Posterior vena cava (tissue), 2 donors: ENCODE measurements at regions of chr20 and their contacts with region 1.

Region 1: DNA sequence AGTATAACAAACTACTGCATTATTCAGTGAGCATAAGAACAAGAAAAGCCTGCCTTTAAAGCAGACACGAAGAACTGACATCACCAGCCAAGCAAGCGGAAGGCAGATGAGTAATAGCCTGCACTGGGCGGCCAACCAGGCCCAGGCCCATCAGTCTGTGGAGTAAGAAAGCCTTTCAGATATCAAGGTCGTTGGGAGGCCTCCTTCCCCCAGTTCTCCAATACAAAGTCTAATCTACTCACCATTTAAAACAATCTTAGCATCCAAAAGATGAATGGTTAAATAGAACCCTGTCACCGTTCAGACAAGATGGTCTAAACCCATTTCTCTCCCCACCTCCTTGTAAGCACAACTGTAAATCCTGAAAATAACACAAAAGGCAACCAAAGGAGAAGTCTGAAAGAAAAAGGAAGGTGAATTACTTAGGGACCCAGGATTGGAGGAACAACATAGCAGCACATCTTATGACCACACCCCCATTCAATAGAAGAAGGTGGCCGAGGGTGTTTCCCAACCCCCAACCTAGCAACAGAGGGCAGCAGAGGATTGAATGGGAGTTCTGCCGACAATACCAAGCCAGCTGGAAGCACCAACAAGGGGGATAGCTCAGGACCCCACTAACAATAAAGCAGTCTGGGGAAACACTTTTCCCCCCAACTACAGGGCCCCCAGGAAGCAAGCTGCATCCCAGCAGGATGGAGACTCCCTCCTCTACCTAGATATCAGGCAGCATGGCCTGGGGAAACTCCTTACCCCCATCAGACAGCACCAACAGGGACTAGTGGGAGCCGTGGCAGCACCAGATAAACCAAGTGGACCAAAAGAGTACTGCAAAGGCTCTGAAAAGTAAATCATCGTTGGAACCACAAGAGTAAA is 67.9 kb downstream of the ZHX3 start:
- DNase-seq: peak; percentile 94

Region 2: GRCh38 chr20:41232973-41233926 is 16.4 kb before region 1 on chr20:
- intact Hi-C with region 1: loop called in 1 of 2 experiments (anchors 2 kb)
- DNase-seq: no peak

Region 3: DNA sequence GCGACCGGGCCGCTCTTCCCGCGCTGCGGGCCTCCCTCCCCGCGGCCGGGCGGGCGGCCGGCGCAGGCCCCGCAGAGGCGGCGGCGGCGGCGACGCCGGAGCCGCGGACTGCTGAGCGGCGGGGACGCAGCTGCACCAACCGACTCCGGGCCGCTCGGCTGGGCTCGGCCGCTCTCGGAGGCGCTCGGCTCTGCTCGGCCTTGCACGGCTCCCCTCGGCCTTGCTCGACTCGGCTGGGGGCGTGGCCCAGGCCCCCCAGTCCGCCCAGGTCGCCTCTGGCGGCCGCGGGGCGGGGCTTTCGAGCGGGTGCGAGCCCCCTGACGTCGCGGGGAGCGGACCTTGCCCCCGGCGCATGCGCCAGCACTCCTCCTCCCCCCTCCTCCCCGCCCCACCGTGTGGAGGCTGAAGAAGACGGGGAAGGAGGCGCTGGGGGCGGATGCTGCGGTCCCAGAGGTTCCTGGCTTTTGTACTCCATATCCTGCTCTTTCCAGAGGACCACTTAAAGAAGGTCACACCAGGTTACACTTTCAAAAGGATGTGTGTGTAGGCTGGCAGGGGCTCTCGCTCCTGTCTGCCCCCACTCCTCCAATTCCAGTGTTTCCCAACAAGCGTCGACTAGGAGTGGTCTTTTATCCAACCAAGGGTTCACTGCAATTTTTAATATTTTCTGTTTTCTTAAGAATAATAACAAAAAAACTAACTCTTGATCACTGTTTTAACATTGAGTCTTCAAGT is 68.1 kb after region 1 on chr20 and contains the start of gene ZHX3:
- intact Hi-C with region 1: loop called (anchors 5 to 10 kb)
- DNase-seq: peak; percentile 99
- total RNA-seq, gene ZHX3: 88.2 to 92.9 TPM